ENCODE measurements at regions of chr3 and their contacts with region 1.

Region 1: GRCh38 chr3:180980611-180981010 is 8.9 kb downstream of the DNAJC19 start:
- DNase-seq: no peak
- CTCF ChIP-seq: no peak

Region 2: GRCh38 chr3:180782195-180782984 is 198.2 kb before region 1 on chr3:
- CTCF ChIA-PET with region 1: no interaction called
- POLR2A ChIA-PET with region 1: no interaction called
- DNase-seq: no peak
- CTCF ChIP-seq: no peak

Region 3: DNA sequence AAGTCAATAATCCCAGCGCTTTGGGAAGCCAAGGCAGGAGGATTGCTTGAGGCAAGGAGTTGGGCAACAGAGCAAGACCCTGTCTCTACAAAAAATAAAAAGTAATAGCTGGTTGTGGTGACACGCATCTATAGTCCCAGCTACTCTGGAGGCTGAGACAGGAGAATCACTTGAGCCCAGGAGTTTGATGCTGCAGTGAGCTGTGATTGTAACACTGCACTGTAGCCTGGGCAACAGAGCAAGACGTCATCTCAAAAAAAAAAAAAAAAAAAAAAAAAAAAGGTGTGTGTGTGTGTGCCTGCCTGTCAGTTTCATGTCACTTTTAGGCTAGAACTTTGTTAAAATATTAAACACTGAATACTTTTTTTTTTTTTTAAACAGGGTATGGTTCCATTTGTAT is 19.5 kb before region 1 on chr3:
- CTCF ChIA-PET with region 1: interaction called, 13 read pairs
- POLR2A ChIA-PET with region 1: no interaction called
- DNase-seq: no peak
- CTCF ChIP-seq: no peak